WTC11 (cell line): ENCODE measurements at regions of chr14 and their contacts with region 1.

Region 1: DNA sequence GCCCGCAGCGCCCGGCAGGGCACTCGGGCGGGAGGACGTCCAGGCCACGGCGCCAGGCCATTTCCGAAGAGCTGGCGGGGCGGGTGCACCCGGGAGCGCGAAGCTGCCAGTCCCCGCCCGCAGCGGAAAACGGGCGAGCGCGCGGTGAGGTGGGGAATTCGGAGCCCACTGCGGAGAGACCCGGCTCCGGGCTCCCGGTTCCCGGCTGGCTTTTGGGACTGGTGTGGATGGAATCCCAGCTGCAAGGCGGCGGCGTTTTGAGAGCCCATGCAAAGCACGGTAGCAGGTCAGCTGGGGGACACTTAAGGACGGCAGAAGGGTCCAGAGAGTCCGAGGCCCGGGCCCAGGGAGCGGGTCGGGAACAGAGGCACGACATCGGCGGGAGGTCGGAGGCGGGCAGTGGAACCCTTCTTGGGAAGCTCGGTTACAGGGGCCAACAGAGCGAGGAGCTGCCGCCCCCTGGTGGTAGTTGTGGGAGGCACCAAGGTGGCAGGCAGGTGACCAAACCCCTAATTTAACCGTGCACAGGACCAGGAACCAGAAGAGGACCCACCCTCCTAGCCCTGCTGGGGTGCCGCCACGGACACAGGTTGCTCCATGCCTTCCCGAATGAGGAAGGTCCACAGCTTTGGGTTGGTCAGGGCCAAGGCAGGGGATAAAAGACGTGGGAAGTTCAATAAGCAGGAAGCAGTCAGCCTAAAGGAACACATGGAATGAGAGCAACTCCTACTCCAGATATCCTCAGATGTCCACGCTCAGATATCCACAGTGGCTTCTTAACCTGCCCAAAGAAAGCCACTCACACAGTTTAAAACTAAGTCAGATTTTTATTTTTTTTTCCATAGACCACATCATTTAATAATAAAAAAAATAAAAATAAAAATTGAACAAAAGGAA is 685 bp upstream of the CDH24 start:
- DNase-seq: peak; percentile 96
- ATAC-seq: peak; percentile 66
- H3K4me3 Mint-ChIP-seq: peak overlapping the region; percentile 83
- H3K27ac Mint-ChIP-seq: peak overlapping the region; percentile 91
- H3K4me1 Mint-ChIP-seq: peaks cover 12% of the 10 kb centered on the region
- H3K27me3 Mint-ChIP-seq: peaks cover 5% of the 10 kb centered on the region; the same call in 1 of the 2 replicates
- CTCF ChIP-seq: peak; percentile 97

Region 2: GRCh38 chr14:22918804-22919600 is 139.0 kb before region 1 on chr14 and contains the start of gene RBM23:
- CTCF ChIA-PET with region 1: interaction called, 10 read pairs
- POLR2A ChIA-PET with region 1: no interaction called
- DNase-seq: peak; percentile 100
- ATAC-seq: peak; percentile 98
- H3K4me3 Mint-ChIP-seq: peak within 1 kb of the TSS; percentile 92
- H3K27ac Mint-ChIP-seq: peak within 1 kb of the TSS; percentile 100
- H3K4me1 Mint-ChIP-seq: peaks cover 17% of the 10 kb centered on the region
- H3K27me3 Mint-ChIP-seq: peaks cover 2% of the 10 kb centered on the region; the same call in 1 of the 2 replicates
- CTCF ChIP-seq: no peak
- total RNA-seq, gene RBM23: 42.4 to 49.4 TPM (median 47.4 TPM) in 3 replicates

Region 3: GRCh38 chr14:22939684-22940083 is 118.3 kb before region 1 on chr14:
- CTCF ChIA-PET with region 1: interaction called, 12 read pairs
- POLR2A ChIA-PET with region 1: no interaction called
- DNase-seq: no peak
- ATAC-seq: no peak
- H3K4me3 Mint-ChIP-seq: no peak overlapping the region
- H3K27ac Mint-ChIP-seq: no peak overlapping the region; the same call in 1 of the 2 replicates
- H3K4me1 Mint-ChIP-seq: 0 out of 2 replicates have a peak, but pooled peaks cover 2% of the 10 kb centered on the region
- H3K27me3 Mint-ChIP-seq: no peaks in the 10 kb centered on the region
- CTCF ChIP-seq: no peak

Region 4: GRCh38 chr14:22973217-22974032 is 84.6 kb before region 1 on chr14:
- CTCF ChIA-PET with region 1: interaction called, 19 read pairs
- POLR2A ChIA-PET with region 1: interaction called, 9 read pairs
- DNase-seq: peak; percentile 50
- ATAC-seq: peak; percentile 16
- H3K4me3 Mint-ChIP-seq: no peak overlapping the region
- H3K27ac Mint-ChIP-seq: peak overlapping the region; percentile 17
- H3K4me1 Mint-ChIP-seq: peaks cover 27% of the 10 kb centered on the region
- H3K27me3 Mint-ChIP-seq: no peaks in the 10 kb centered on the region
- CTCF ChIP-seq: peak; percentile 51

Region 5: DNA sequence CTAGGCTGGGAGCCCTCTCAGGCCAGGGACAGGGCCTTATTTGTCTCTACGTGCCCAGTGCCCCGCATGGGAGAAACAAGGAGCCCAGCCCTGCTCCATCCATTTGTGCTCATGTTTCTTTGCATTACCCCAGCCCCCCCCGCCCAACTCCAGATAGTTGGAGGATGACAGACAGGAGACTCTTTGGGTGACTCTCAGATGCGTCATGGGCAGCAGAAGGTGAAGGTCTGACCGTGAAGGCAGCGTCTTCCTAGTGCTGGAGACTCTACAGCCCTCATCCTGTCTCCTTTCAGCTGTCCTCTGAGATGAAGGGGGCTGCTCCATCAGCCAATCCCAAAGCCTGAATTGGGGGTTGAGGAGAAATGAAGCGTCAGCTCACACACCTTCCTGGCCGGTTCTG is 16.3 kb before region 1 on chr14:
- CTCF ChIA-PET with region 1: interaction called, 44 read pairs
- POLR2A ChIA-PET with region 1: no interaction called
- DNase-seq: no peak
- ATAC-seq: no peak
- H3K4me3 Mint-ChIP-seq: no peak overlapping the region
- H3K27ac Mint-ChIP-seq: no peak overlapping the region
- H3K4me1 Mint-ChIP-seq: peaks cover 5% of the 10 kb centered on the region; the same call in 1 of the 2 replicates
- H3K27me3 Mint-ChIP-seq: no peaks in the 10 kb centered on the region
- CTCF ChIP-seq: no peak

Region 6: GRCh38 chr14:23095196-23096108 is 37.4 kb after region 1 on chr14 and contains the start of gene C14orf119:
- CTCF ChIA-PET with region 1: interaction called, 30 read pairs
- POLR2A ChIA-PET with region 1: interaction called, 13 read pairs
- DNase-seq: peak; percentile 100
- ATAC-seq: peak; percentile 91
- H3K4me3 Mint-ChIP-seq: no peak within 1 kb of the TSS
- H3K27ac Mint-ChIP-seq: no peak within 1 kb of the TSS
- H3K4me1 Mint-ChIP-seq: peaks cover 37% of the 10 kb centered on the region
- H3K27me3 Mint-ChIP-seq: no peaks in the 10 kb centered on the region; the same call in 1 of the 2 replicates
- CTCF ChIP-seq: no peak
- total RNA-seq, gene C14orf119: 67.8 to 81.3 TPM (median 71.3 TPM) in 3 replicates